ENCODE measurements at regions of chr1 and their contacts with region 1.

Region 1: DNA sequence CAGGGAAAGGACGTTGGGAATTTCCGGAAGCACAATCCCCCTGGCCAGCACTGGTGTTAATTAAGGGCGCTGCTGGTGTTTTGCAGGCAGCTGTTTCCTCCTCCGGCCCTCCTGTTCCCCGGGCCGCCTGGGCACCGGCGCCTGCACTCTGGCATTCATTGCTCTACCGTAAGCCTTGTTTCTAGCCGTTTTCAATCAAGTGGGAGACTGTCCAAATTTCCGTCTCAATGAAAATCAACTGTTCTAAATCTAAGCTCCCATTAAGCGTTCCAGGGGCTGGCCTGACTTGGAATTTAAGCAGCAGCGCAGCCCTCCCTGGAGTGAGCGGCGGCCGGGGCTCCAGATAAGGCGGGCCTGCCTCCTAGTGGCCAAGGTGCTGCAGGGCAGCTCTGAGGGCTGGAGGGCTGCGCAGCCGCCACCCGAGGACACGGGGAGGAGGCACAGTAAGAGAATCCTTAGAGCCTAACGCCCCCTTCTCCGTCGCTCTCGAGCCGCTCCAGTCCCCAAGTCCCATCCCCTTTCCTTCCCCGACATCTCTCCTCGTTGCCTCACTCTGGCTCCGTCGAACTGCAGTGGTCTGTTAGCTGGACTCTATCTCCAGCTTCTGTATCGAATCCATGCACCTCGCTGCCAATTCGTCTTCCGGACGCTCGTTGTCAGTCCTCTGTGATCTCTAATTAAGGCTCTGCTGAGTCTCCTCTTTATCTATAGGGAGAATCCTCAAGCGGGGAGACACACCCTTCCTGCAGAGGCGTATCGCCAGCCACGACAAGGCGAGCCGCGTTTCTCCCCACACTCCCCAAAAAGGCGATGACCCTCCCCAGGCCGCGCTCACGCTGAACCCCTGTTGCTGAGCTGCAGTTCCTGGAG is 57.8 kb upstream of the LRRC8D start:
- DNase-seq: peak; percentile 82 to 85 (median 84)
- H3K4me3 ChIP-seq: peak overlapping the region; percentile 11 to 74
- H3K4me3 Mint-ChIP-seq: peak overlapping the region; percentile 88 to 97 (median 92)
- H3K27ac ChIP-seq: peak overlapping the region; percentile 62
- H3K27ac Mint-ChIP-seq: peak overlapping the region; percentile 80 to 97 (median 94)
- H3K4me1 ChIP-seq: peaks cover 53% of the 10 kb centered on the region
- H3K4me1 Mint-ChIP-seq: peaks cover 32 to 55% (median 46%) of the 10 kb centered on the region in 4 donors
- H3K27me3 ChIP-seq: no peaks in the 10 kb centered on the region
- H3K27me3 Mint-ChIP-seq: no peaks in the 10 kb centered on the region

Region 2: GRCh38 chr1:89454845-89455521 is 308.0 kb before region 1 on chr1:
- CTCF ChIA-PET with region 1: no interaction called
- POLR2A ChIA-PET with region 1: no interaction called
- intact Hi-C with region 1: no loop called
- DNase-seq: peak; percentile 67 to 73 (median 69)
- H3K4me3 ChIP-seq: no peak overlapping the region
- H3K4me3 Mint-ChIP-seq: no peak overlapping the region
- H3K27ac ChIP-seq: no peak overlapping the region
- H3K27ac Mint-ChIP-seq: peak overlapping the region in 2 of 7 donors; percentile 48 to 68
- H3K4me1 ChIP-seq: peaks cover 11% of the 10 kb centered on the region
- H3K4me1 Mint-ChIP-seq: peaks cover 9 to 14% (median 12%) of the 10 kb centered on the region in 4 donors
- H3K27me3 ChIP-seq: no peaks in the 10 kb centered on the region
- H3K27me3 Mint-ChIP-seq: peaks cover 1 to 2% of the 10 kb centered on the region in 2 donors

Region 3: GRCh38 chr1:89578151-89578550 is 184.9 kb before region 1 on chr1:
- CTCF ChIA-PET with region 1: interaction called, 71 read pairs
- POLR2A ChIA-PET with region 1: interaction called, 19 read pairs
- intact Hi-C with region 1: loop called (anchors 1 kb)
- DNase-seq: no peak
- H3K4me3 ChIP-seq: no peak overlapping the region
- H3K4me3 Mint-ChIP-seq: no peak overlapping the region
- H3K27ac ChIP-seq: no peak overlapping the region
- H3K27ac Mint-ChIP-seq: no peak overlapping the region
- H3K4me1 ChIP-seq: no peaks in the 10 kb centered on the region
- H3K4me1 Mint-ChIP-seq: peaks cover 0 to 7% (median 4%) of the 10 kb centered on the region in 4 donors
- H3K27me3 ChIP-seq: no peaks in the 10 kb centered on the region
- H3K27me3 Mint-ChIP-seq: no peaks in the 10 kb centered on the region

Region 4: DNA sequence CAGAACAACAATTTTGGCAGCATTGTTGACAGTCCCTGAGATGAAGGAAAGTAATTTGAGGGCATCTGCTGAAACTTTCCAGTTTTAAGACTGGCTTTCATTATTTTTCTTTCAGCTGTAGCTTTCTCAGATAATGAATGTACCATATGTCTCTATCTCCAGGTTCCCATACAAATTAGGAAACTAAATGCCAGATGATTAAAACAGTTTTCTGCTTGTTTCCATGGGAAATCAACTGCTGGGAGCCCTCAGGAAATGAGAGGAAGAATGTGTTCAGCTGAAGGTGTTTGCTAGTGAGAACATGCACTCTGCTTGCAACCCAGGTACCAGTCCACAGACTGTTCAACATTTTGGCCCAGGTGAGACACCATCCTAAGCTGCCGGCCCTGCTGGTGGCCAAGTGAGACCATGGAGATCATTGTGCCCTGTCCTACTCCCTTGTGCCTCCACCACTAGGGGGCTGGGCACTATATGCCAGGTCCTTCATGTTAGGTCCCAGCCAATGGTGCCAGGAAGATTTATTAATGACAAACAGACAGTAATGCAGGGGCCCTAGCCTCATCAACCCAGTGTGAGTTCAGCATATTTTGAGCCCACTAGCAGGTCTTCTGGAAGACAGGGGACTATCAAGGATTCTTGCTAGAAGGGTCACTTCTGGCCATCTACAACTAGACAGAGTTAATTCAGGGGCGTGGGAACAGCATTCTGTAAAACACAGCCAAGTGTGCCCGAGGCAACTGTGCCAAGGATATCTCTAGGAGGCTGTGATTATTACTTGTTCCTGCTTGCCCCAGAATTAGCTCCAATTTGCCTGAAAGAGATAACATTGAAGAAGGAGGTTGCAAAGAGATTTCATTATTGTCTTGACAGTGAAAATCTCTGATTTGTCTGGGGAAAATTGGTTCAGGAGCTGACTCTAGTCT is 147.1 kb before region 1 on chr1:
- CTCF ChIA-PET with region 1: interaction called, 629 read pairs
- POLR2A ChIA-PET with region 1: interaction called, 90 read pairs
- intact Hi-C with region 1: no loop called
- DNase-seq: no peak
- H3K4me3 ChIP-seq: no peak overlapping the region
- H3K4me3 Mint-ChIP-seq: no peak overlapping the region
- H3K27ac ChIP-seq: no peak overlapping the region
- H3K27ac Mint-ChIP-seq: peak overlapping the region in 6 of 7 donors; percentile 5 to 71 (median 44)
- H3K4me1 ChIP-seq: peaks cover 69% of the 10 kb centered on the region
- H3K4me1 Mint-ChIP-seq: peaks cover 51 to 92% (median 71%) of the 10 kb centered on the region in 4 donors
- H3K27me3 ChIP-seq: no peaks in the 10 kb centered on the region
- H3K27me3 Mint-ChIP-seq: no peaks in the 10 kb centered on the region

Region 5: GRCh38 chr1:89657886-89658285 is 105.1 kb before region 1 on chr1:
- CTCF ChIA-PET with region 1: interaction called, 33 read pairs
- POLR2A ChIA-PET with region 1: interaction called, 34 read pairs
- intact Hi-C with region 1: no loop called
- DNase-seq: peak; percentile 74 to 86 (median 76)
- H3K4me3 ChIP-seq: no peak overlapping the region
- H3K4me3 Mint-ChIP-seq: peak overlapping the region; percentile 34 to 78 (median 70)
- H3K27ac ChIP-seq: peak overlapping the region; percentile 57
- H3K27ac Mint-ChIP-seq: peak overlapping the region; percentile 86 to 97 (median 92)
- H3K4me1 ChIP-seq: peaks cover 97% of the 10 kb centered on the region
- H3K4me1 Mint-ChIP-seq: peaks cover 71 to 96% (median 85%) of the 10 kb centered on the region in 4 donors
- H3K27me3 ChIP-seq: no peaks in the 10 kb centered on the region
- H3K27me3 Mint-ChIP-seq: no peaks in the 10 kb centered on the region

Region 6: GRCh38 chr1:89698624-89699023 is 64.4 kb before region 1 on chr1:
- CTCF ChIA-PET with region 1: interaction called, 23 read pairs
- POLR2A ChIA-PET with region 1: interaction called, 21 read pairs
- intact Hi-C with region 1: loop called (anchors 5 kb)
- DNase-seq: peak in 2 of 5 donors; percentile 19 to 23
- H3K4me3 ChIP-seq: peak overlapping the region in 1 of 2 donors; percentile 0
- H3K4me3 Mint-ChIP-seq: peak overlapping the region; percentile 78 to 91 (median 86)
- H3K27ac ChIP-seq: peak overlapping the region; percentile 16
- H3K27ac Mint-ChIP-seq: peak overlapping the region; percentile 81 to 95 (median 92)
- H3K4me1 ChIP-seq: peaks cover 89% of the 10 kb centered on the region
- H3K4me1 Mint-ChIP-seq: peaks cover 68 to 91% (median 82%) of the 10 kb centered on the region in 4 donors
- H3K27me3 ChIP-seq: no peaks in the 10 kb centered on the region
- H3K27me3 Mint-ChIP-seq: no peaks in the 10 kb centered on the region

Region 7: GRCh38 chr1:89780721-89781120 is 17.7 kb after region 1 on chr1:
- CTCF ChIA-PET with region 1: interaction called, 21 read pairs
- POLR2A ChIA-PET with region 1: interaction called, 4 read pairs
- intact Hi-C with region 1: no loop called
- DNase-seq: peak; percentile 24 to 47 (median 33)
- H3K4me3 ChIP-seq: no peak overlapping the region
- H3K4me3 Mint-ChIP-seq: peak overlapping the region in 3 of 8 donors; percentile 0 to 67 (median 10)
- H3K27ac ChIP-seq: no peak overlapping the region
- H3K27ac Mint-ChIP-seq: peak overlapping the region in 2 of 7 donors; percentile 20 to 52
- H3K4me1 ChIP-seq: peaks cover 21% of the 10 kb centered on the region
- H3K4me1 Mint-ChIP-seq: peaks cover 19 to 24% (median 22%) of the 10 kb centered on the region in 4 donors
- H3K27me3 ChIP-seq: no peaks in the 10 kb centered on the region
- H3K27me3 Mint-ChIP-seq: no peaks in the 10 kb centered on the region